Testis (tissue), 5 donors: ENCODE measurements at regions of chr13 and their contacts with region 1.

Region 1: DNA sequence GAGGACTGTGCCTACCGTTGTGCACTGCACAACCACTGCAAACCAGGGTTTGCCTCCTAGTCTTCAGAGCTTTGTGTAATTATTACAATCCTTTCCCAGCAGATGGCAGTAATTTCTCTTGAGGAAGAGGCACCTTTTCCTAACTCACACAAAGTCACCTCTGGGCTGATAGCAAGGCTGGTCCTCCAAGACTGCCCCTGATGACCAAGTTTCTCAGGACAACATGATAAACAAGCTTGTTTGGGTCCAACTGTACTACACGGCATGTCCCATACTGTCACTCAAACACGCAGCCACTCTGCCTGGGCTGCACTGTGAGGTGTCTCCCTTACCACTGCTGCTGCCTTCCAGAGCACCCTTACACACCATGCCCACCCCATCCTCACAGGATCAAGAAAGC is 39.3 kb downstream of the RFXAP start:
- DNase-seq: no peak
- H3K4me3 ChIP-seq: no peak overlapping the region
- H3K27ac ChIP-seq: no peak overlapping the region
- H3K4me1 ChIP-seq: no peaks in the 10 kb centered on the region
- H3K27me3 ChIP-seq: no peaks in the 10 kb centered on the region
- CTCF ChIP-seq: peak in 2 of 3 experiments; percentile 23 to 44
- POLR2A ChIP-seq: no peak

Region 2: DNA sequence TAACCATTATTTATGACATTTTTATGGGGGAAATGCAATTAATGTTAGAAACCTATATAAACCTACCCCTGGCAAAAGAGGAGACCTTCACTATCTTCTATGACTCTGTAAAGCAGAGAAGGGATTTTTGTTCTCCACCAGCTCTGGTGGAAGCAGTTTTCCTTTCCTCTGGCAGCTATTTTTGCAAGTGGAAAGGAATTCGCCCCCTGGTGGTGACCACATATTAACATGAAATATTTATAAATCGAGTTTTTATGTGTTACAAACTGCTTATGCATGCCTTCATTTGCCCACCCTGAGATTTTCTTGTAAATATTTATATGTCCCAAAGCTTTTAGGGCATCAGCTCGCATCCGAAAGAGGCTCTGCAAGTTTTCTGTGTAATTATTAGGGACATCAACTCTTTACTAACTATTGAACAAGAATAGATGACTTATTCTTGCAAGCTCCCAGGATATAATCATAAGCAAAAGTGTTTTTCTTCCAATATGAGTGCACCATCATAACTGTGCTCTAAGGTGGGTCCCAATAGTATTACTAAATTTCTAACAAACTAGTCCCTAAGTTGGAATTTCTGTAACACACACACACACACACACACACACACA is 122.1 kb before region 1 on chr13:
- intact Hi-C with region 1: no loop called
- DNase-seq: peak; percentile 67
- H3K4me3 ChIP-seq: no peak overlapping the region
- H3K27ac ChIP-seq: no peak overlapping the region
- H3K4me1 ChIP-seq: no peaks in the 10 kb centered on the region
- H3K27me3 ChIP-seq: no peaks in the 10 kb centered on the region
- CTCF ChIP-seq: peak; percentile 57 to 90 (median 75)
- POLR2A ChIP-seq: no peak

Region 3: DNA sequence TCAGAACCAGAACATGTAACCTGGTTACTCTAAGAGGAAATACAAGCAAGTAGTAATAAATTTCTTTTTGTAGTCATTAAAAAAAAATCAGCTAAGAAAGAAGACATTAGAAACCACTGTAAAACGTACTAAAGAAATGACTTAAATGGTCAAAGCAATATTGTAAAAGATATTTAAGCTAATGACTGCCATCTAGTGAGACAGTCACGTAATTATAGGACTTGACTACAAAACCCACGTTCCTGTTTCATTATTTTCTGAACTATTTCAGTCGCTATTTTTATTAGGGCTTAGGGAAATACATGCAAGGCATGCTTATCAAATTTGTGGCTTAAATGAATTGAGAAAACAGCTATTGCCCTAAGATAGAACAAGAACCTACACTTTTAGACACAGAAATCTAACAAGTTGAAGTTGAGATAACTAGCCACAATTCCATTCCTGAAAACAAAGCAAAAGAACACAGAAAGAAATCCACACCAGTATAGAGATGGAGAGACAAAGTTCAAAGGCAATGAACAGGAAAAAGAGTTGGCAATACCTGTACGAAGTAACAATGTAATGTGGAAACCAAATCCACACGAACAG is 123.0 kb after region 1 on chr13:
- intact Hi-C with region 1: loop called (anchors 5 kb)
- DNase-seq: no peak
- H3K4me3 ChIP-seq: no peak overlapping the region
- H3K27ac ChIP-seq: no peak overlapping the region
- H3K4me1 ChIP-seq: no peaks in the 10 kb centered on the region
- H3K27me3 ChIP-seq: no peaks in the 10 kb centered on the region
- CTCF ChIP-seq: peak in 2 of 3 experiments; percentile 22 to 55
- POLR2A ChIP-seq: no peak

Region 4: DNA sequence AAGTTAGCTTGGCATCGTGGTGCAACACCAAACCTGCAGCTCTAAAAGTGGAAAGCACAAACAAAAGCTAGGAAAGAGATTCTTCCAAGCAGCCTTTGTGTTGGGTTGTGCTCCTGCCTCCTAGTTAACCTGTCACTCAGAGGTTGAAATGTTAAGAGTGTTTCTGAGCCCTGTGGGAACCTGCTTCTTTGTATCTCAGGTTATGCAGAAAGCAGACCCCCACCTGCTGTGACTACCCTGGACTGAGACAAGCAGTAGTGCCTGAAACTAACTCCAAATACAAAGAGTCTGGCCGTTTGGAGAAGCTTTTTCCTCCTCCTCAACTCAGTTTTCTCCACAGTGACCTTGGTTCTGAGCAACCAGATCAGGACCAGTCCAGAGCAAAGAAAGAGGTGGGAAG is 405.6 kb after region 1 on chr13:
- intact Hi-C with region 1: no loop called
- DNase-seq: no peak
- H3K4me3 ChIP-seq: no peak overlapping the region
- H3K27ac ChIP-seq: no peak overlapping the region
- H3K4me1 ChIP-seq: no peaks in the 10 kb centered on the region
- H3K27me3 ChIP-seq: no peaks in the 10 kb centered on the region
- CTCF ChIP-seq: no peak
- POLR2A ChIP-seq: no peak